ENCODE measurements at regions of chr2 and their contacts with region 1.

Region 1: GRCh38 chr2:38602732-38603401 is at the start of gene HNRNPLL:
- DNase-seq: peak; percentile 99
- H3K4me3 ChIP-seq: peak within 1 kb of the TSS; percentile 94
- H3K27ac ChIP-seq: peak within 1 kb of the TSS; percentile 82
- H3K4me1 ChIP-seq: peaks cover 33% of the 10 kb centered on the region
- H3K27me3 ChIP-seq: no peaks in the 10 kb centered on the region
- total RNA-seq, gene HNRNPLL: 34.9 and 42.6 TPM in 2 replicates

Region 2: DNA sequence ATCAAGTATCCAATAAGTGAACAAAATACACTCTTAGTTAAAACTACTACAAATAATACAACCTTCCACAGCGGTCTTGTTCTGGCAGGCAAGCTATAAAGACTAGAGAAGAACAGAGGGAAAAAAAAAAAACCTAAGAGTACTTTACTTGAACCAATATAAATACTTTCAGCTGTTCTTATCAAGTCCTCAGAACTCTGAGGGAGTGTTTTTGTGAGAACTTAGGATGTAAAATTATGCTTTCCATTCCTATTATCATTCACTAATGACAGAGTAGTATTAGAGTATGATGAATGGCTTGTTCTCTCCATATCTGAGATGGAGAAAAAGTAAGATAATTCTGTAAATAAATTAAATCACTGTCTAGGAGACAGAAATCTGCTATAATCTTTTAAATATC is 294.0 kb before region 1 on chr2:
- in situ Hi-C with region 1: no loop called
- DNase-seq: no peak
- H3K4me3 ChIP-seq: no peak overlapping the region
- H3K27ac ChIP-seq: no peak overlapping the region
- H3K4me1 ChIP-seq: no peaks in the 10 kb centered on the region
- H3K27me3 ChIP-seq: no peaks in the 10 kb centered on the region

Region 3: GRCh38 chr2:38709567-38710194 is 106.8 kb after region 1 on chr2:
- in situ Hi-C with region 1: loop called (anchors 10 kb)
- DNase-seq: no peak
- H3K4me3 ChIP-seq: no peak overlapping the region
- H3K27ac ChIP-seq: no peak overlapping the region
- H3K4me1 ChIP-seq: no peaks in the 10 kb centered on the region
- H3K27me3 ChIP-seq: no peaks in the 10 kb centered on the region

Region 4: GRCh38 chr2:38978296-38978903 is 375.5 kb after region 1 on chr2:
- in situ Hi-C with region 1: no loop called
- DNase-seq: no peak
- H3K4me3 ChIP-seq: no peak overlapping the region
- H3K27ac ChIP-seq: no peak overlapping the region
- H3K4me1 ChIP-seq: no peaks in the 10 kb centered on the region
- H3K27me3 ChIP-seq: no peaks in the 10 kb centered on the region